H1 (cell line): ENCODE measurements at regions of chr3 and their contacts with region 1.

Region 1: GRCh38 chr3:182450942-182451787 is 342.1 kb upstream of the ATP11B start:
- DNase-seq: no peak
- H3K4me3 ChIP-seq: no peak overlapping the region
- H3K27ac ChIP-seq: no peak overlapping the region
- H3K4me1 ChIP-seq: peaks cover 3 to 6% (median 4%) of the 10 kb centered on the region in 4 experiments; a peak in 5 of 7 replicates
- H3K27me3 ChIP-seq: no peaks in the 10 kb centered on the region
- CTCF ChIP-seq: no peak
- EP300 ChIP-seq: no peak
- POLR2A ChIP-seq: no peak
- RAD21 ChIP-seq: no peak

Region 2: GRCh38 chr3:182436547-182436946 is 14.6 kb before region 1 on chr3:
- CTCF ChIA-PET with region 1: interaction called, 11 read pairs
- POLR2A ChIA-PET with region 1: interaction called, 4 read pairs
- DNase-seq: no peak
- H3K4me3 ChIP-seq: no peak overlapping the region
- H3K27ac ChIP-seq: no peak overlapping the region
- H3K4me1 ChIP-seq: no peaks in the 10 kb centered on the region
- H3K27me3 ChIP-seq: no peaks in the 10 kb centered on the region
- CTCF ChIP-seq: no peak
- EP300 ChIP-seq: no peak
- POLR2A ChIP-seq: no peak
- RAD21 ChIP-seq: no peak